ENCODE measurements at regions of chr1 and their contacts with region 1.

Region 1: GRCh38 chr1:156565519-156565918 is 6.8 kb downstream of the IQGAP3 start:
- DNase-seq: no peak
- H3K4me3 ChIP-seq: no peak overlapping the region
- H3K27ac ChIP-seq: no peak overlapping the region
- H3K4me1 ChIP-seq: no peaks in the 10 kb centered on the region
- H3K27me3 ChIP-seq: no peaks in the 10 kb centered on the region
- CTCF ChIP-seq: no peak
- POLR2A ChIP-seq: no peak

Region 2: DNA sequence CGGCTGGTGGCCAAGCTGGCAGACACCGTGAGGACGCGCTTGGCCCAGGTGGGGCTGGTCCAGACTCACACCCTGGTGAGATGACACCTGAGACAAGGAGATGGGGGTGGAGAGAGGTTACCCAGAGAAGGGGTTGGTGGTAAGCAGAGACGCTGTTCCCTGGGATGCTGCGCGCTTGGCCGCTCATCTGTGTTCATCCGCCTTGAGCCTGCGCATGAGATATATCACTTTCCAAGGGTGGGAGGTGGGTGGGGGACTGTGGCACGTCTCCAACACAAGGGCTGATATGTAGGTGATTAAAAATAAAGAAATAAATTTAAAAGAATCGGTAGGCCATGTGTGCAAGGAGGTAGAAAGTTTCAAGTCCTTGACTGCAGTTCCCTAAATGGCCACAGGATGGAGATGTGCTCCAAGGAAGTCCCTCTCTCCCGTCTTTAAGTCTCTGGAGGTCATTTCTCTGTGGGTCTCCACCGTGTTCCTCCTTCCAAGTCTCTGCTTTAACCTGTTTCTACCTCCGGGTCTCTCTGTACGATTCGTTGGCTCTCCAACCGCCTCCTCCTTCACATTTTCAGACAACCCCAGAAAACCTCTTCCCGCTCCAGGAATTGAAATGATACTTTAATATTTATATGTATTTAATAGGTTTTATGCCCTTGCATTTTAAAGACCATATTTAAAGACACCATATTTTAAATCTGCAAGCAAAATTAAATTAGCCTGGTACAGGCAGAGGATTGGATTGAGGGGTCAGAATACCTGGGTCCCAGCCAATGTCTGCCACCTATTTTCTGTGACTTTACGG is 18.5 kb after region 1 on chr1:
- intact Hi-C with region 1: loop called (anchors 1 kb)
- DNase-seq: peak in 1 of 2 donors; percentile 57
- H3K4me3 ChIP-seq: no peak overlapping the region
- H3K27ac ChIP-seq: no peak overlapping the region
- H3K4me1 ChIP-seq: no peaks in the 10 kb centered on the region
- H3K27me3 ChIP-seq: no peaks in the 10 kb centered on the region
- CTCF ChIP-seq: peak; percentile 87 to 92 (median 89)
- POLR2A ChIP-seq: no peak